Psoas muscle (tissue), 8 donors: ENCODE measurements at regions of chr1 and their contacts with region 1.

Region 1: DNA sequence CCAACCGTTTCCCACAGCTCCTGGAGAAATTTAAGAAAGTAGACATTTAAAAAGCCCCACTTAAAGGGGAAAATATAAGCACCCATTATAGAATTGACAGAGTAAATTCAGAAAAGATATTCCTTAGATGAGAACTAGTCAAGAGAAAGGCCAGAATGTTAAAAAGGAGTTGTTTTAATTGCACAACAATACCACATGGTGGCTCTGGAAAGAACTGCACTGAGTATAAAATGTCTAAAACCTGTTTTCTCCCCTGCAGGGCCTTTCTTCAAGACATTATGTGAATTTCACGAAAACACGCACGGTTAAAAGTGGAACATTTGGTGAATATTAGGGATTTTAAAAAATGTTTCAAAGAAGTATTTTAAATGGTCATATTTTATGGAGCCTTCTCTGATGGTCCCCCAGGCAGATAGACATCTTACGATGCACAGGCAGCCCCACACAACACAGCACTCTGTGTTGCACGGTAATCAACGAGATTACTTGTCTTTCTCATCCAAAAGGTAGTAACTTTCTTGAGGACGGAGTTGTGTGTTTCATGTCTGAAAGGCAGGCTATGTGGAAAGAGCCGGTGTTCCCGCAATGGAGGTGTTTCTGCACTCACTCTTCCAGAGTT is 101.9 kb downstream of the PRRX1 start:
- DNase-seq: no peak
- ATAC-seq: peak; percentile 68 to 94 (median 76)
- H3K4me3 ChIP-seq: no peak overlapping the region
- H3K27ac ChIP-seq: no peak overlapping the region
- H3K4me1 ChIP-seq: no peaks in the 10 kb centered on the region
- H3K27me3 ChIP-seq: no peaks in the 10 kb centered on the region
- CTCF ChIP-seq: peak; percentile 69

Region 2: GRCh38 chr1:170531758-170532657 is 233.8 kb before region 1 on chr1 and contains the start of gene GORAB:
- intact Hi-C with region 1: loop called in 1 of 2 experiments (anchors 10 kb)
- DNase-seq: peak; percentile 93
- ATAC-seq: peak; percentile 98 to 100 (median 98)
- H3K4me3 ChIP-seq: peak within 1 kb of the TSS; percentile 82
- H3K27ac ChIP-seq: peak within 1 kb of the TSS; percentile 94
- H3K4me1 ChIP-seq: peaks cover 9% of the 10 kb centered on the region
- H3K27me3 ChIP-seq: no peaks in the 10 kb centered on the region
- CTCF ChIP-seq: no peak
- total RNA-seq, gene GORAB: 2.3 to 7.8 (median 3.5) TPM

Region 3: GRCh38 chr1:170670802-170671628 is 94.8 kb before region 1 on chr1:
- intact Hi-C with region 1: loop called in 1 of 2 experiments (anchors 5 kb)
- DNase-seq: peak; percentile 68 to 88
- ATAC-seq: peak in 2 of 4 donors; percentile 15 to 43
- H3K4me3 ChIP-seq: peak overlapping the region; percentile 72
- H3K27ac ChIP-seq: peak overlapping the region; percentile 91
- H3K4me1 ChIP-seq: peaks cover 58% of the 10 kb centered on the region
- H3K27me3 ChIP-seq: peaks cover 0 to 6% (median 2%) of the 10 kb centered on the region in 3 donors
- CTCF ChIP-seq: peak; percentile 52

Region 4: GRCh38 chr1:170685166-170685565 is 80.7 kb before region 1 on chr1:
- intact Hi-C with region 1: loop called in 1 of 2 experiments (anchors 5 kb)
- DNase-seq: peak in 1 of 2 donors; percentile 54
- ATAC-seq: peak; percentile 45 to 80 (median 56)
- H3K4me3 ChIP-seq: no peak overlapping the region
- H3K27ac ChIP-seq: peak overlapping the region; percentile 61
- H3K4me1 ChIP-seq: peaks cover 54% of the 10 kb centered on the region
- H3K27me3 ChIP-seq: no peaks in the 10 kb centered on the region
- CTCF ChIP-seq: no peak

Region 5: GRCh38 chr1:171075041-171075440 is 309.2 kb after region 1 on chr1:
- intact Hi-C with region 1: no loop called
- DNase-seq: no peak
- ATAC-seq: no peak
- H3K4me3 ChIP-seq: no peak overlapping the region
- H3K27ac ChIP-seq: no peak overlapping the region
- H3K4me1 ChIP-seq: no peaks in the 10 kb centered on the region
- H3K27me3 ChIP-seq: no peaks in the 10 kb centered on the region
- CTCF ChIP-seq: no peak

Region 6: DNA sequence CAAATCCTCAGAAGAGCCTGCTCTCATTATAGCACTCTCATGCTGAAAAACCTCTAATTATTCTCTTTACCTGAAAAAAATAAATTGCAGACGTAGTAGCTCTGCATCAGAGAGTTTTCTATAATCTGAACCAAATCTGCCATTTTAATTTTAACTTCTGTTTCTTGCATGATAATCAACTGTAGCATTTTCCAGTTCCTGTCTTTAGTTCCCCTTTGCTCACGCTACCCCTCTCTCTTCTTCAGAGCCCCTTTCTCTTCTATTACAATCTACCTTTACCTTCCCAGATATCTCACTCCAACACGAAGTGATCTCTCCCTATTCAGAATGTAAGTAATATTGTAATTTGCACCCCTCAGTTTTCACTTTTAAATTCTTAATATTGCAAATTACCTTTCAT is 513.9 kb after region 1 on chr1:
- intact Hi-C with region 1: no loop called
- DNase-seq: no peak
- ATAC-seq: no peak
- H3K4me3 ChIP-seq: no peak overlapping the region
- H3K27ac ChIP-seq: no peak overlapping the region
- H3K4me1 ChIP-seq: no peaks in the 10 kb centered on the region
- H3K27me3 ChIP-seq: no peaks in the 10 kb centered on the region
- CTCF ChIP-seq: no peak